ENCODE measurements at regions of chr1 and their contacts with region 1.

Region 1: DNA sequence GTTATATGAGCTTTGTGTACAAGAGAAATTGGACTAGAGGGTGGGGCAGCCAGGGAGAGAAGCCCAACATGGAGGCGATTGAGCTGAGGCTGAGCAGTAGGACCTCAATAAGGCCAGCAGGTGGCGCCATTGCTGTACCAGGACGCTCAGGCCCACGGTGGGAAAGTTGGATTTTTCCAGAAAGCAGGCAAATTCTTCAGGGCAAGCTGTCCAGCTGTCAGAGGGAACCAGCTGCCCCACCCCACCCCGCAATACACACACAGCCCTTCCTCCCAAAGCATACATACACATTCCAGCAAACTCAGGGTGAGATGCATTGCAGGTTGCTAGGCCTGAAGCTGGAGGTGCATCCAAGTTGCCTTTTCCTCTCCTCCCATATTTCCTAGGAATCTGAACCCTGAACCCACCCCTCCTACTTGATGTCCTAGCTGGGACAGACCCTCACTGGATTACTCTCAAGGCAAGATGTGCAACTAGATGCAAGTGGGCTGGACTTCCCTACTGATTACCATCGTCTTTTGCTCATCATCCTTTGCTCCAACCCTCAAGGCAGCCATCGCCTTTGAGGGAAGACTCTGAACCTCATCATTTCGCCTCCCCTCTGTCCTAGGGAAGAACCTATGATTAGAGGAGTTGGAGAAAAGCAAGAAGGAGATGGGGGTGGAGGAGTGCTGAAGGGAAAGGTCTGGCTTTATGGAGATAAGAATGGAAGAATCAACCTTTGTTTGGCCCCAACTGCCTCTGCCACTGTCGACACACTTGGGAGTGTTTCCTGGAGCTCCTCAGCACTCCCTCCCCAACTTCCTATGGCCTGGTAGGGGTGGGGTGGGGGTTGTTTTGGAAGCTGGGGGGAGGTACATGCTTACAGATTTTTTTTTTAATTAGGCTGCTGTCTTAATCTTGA is 25.5 kb downstream of the CD34 start:
- DNase-seq: peak; percentile 79
- ATAC-seq: peak; percentile 95
- H3K4me3 Mint-ChIP-seq: no peak overlapping the region
- H3K27ac Mint-ChIP-seq: no peak overlapping the region
- H3K4me1 Mint-ChIP-seq: peaks cover 7% of the 10 kb centered on the region; the same call in 1 of the 2 replicates
- H3K27me3 Mint-ChIP-seq: peaks cover 8% of the 10 kb centered on the region
- CTCF ChIP-seq: peak; percentile 90

Region 2: GRCh38 chr1:207789792-207790787 is 95.3 kb before region 1 on chr1:
- CTCF ChIA-PET with region 1: no interaction called
- POLR2A ChIA-PET with region 1: no interaction called
- DNase-seq: no peak
- ATAC-seq: no peak
- H3K4me3 Mint-ChIP-seq: no peak overlapping the region
- H3K27ac Mint-ChIP-seq: no peak overlapping the region
- H3K4me1 Mint-ChIP-seq: no peaks in the 10 kb centered on the region
- H3K27me3 Mint-ChIP-seq: no peaks in the 10 kb centered on the region
- CTCF ChIP-seq: no peak

Region 3: DNA sequence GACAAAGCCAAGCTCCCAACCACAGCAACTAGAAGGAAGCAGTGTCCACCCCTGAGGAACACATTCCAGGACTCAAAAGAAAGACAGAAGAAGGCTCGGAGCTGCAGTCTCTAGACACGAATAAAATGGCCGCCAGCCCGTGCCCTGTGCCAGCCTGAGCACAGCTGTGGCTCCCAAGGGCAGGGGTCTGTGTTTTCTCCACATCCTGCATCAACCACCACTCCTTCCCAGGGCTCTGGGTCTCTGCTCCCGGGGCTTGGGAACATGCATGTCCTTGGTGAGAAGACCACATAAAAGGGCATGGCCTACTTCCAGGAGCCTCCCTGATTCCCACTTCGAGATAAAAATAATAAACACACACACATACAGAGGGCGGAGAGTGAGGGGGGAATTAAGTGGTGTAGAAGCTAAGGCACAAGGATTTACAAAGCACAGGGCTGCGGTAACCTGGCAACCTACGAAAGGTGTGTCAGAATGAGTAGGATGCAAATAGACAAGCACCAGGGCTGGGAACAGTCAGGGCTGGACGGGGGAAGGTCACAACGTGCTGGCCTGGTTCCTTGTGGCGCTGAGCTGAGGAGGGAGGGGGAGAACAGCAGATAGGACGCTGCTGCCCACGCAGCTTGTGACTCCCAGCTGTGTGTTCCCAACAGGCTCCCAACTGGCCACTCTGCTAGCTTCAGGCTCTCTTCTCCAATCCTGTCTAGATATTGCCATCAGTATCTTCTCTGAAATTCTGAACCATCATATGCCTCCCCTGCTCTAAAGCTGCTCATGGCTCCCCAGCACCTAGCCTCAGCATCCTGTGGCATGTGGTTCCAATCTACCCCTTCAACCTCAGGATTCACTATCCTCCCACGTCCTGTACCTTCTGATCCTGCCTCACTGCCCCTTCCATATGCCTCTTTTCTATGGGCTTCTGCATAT is 47.0 kb before region 1 on chr1:
- CTCF ChIA-PET with region 1: interaction called, 10 read pairs
- POLR2A ChIA-PET with region 1: no interaction called
- DNase-seq: no peak
- ATAC-seq: no peak
- H3K4me3 Mint-ChIP-seq: no peak overlapping the region
- H3K27ac Mint-ChIP-seq: no peak overlapping the region
- H3K4me1 Mint-ChIP-seq: no peaks in the 10 kb centered on the region
- H3K27me3 Mint-ChIP-seq: no peaks in the 10 kb centered on the region
- CTCF ChIP-seq: no peak

Region 4: GRCh38 chr1:207897188-207897587 is 11.8 kb after region 1 on chr1:
- CTCF ChIA-PET with region 1: interaction called, 25 read pairs
- POLR2A ChIA-PET with region 1: no interaction called
- DNase-seq: no peak
- ATAC-seq: no peak
- H3K4me3 Mint-ChIP-seq: no peak overlapping the region
- H3K27ac Mint-ChIP-seq: no peak overlapping the region
- H3K4me1 Mint-ChIP-seq: no peaks in the 10 kb centered on the region
- H3K27me3 Mint-ChIP-seq: no peaks in the 10 kb centered on the region
- CTCF ChIP-seq: no peak

Region 5: GRCh38 chr1:207925210-207925609 is 39.8 kb after region 1 on chr1:
- CTCF ChIA-PET with region 1: interaction called, 30 read pairs
- POLR2A ChIA-PET with region 1: no interaction called
- DNase-seq: peak; percentile 59
- ATAC-seq: peak; percentile 87
- H3K4me3 Mint-ChIP-seq: no peak overlapping the region
- H3K27ac Mint-ChIP-seq: no peak overlapping the region
- H3K4me1 Mint-ChIP-seq: peaks cover 24% of the 10 kb centered on the region
- H3K27me3 Mint-ChIP-seq: no peaks in the 10 kb centered on the region
- CTCF ChIP-seq: no peak

Region 6: GRCh38 chr1:207973898-207974568 is 88.7 kb after region 1 on chr1:
- CTCF ChIA-PET with region 1: interaction called, 12 read pairs
- POLR2A ChIA-PET with region 1: no interaction called
- DNase-seq: no peak
- ATAC-seq: no peak
- H3K4me3 Mint-ChIP-seq: no peak overlapping the region
- H3K27ac Mint-ChIP-seq: no peak overlapping the region
- H3K4me1 Mint-ChIP-seq: no peaks in the 10 kb centered on the region
- H3K27me3 Mint-ChIP-seq: no peaks in the 10 kb centered on the region; the same call in 1 of the 2 replicates
- CTCF ChIP-seq: no peak